Left lung (tissue), 14 donors: ENCODE measurements at regions of chr3 and their contacts with region 1.

Region 1: DNA sequence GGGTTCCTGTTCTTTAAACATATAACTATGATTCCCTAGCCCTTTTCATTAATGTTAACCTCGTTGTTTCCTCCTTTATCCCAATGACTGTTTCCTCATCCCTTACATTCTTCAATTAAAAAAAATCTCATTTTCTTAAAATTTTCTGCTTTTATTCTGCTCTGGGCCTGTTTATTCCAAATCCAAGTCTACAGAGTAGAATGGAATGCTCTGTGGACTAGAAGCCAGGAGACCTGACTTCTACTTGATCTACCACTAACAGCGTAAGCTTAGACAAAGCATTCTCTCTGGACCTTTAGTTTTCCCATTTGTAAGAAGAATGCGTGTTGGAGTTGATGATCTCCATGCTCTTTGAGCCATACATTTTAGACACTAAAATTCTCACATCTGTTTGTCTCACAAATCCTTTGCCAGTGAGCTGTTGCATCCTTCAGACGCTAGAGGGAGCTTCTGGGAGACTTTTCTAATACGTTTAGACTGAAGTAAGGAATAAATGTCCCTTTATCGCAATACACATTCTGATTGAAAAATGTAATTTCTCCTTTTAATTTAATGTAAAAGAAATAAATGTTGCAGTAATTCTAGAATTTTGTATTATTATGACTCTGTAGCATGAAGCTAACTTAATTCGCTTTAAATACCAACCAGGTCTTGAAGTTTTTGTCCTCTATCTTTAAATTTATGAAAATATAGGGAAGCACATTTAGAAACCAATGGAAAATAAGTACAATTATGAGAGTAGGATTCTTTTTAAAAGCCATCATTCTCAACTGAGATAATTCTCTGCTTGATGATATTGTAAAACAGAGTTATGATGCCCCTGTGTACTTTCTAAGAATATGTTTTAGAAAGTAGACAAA is 21.7 kb upstream of the GMNC start:
- DNase-seq: peak in 2 of 4 donors; percentile 23 to 53
- ATAC-seq: peak; percentile 59
- H3K4me3 ChIP-seq: no peak overlapping the region
- H3K27ac ChIP-seq: no peak overlapping the region
- H3K4me1 ChIP-seq: no peaks in the 10 kb centered on the region
- H3K27me3 ChIP-seq: peaks cover 2 to 3% of the 10 kb centered on the region in 2 donors
- CTCF ChIP-seq: peak; percentile 74 to 79

Region 2: GRCh38 chr3:190739641-190740185 is 144.5 kb before region 1 on chr3:
- intact Hi-C with region 1: no loop called
- DNase-seq: no peak
- ATAC-seq: no peak
- H3K4me3 ChIP-seq: no peak overlapping the region
- H3K27ac ChIP-seq: no peak overlapping the region
- H3K4me1 ChIP-seq: no peaks in the 10 kb centered on the region
- H3K27me3 ChIP-seq: no peaks in the 10 kb centered on the region
- CTCF ChIP-seq: no peak

Region 3: GRCh38 chr3:190840146-190840545 is 44.1 kb before region 1 on chr3:
- intact Hi-C with region 1: no loop called
- DNase-seq: no peak
- ATAC-seq: no peak
- H3K4me3 ChIP-seq: no peak overlapping the region
- H3K27ac ChIP-seq: no peak overlapping the region
- H3K4me1 ChIP-seq: no peaks in the 10 kb centered on the region
- H3K27me3 ChIP-seq: no peaks in the 10 kb centered on the region
- CTCF ChIP-seq: no peak

Region 4: DNA sequence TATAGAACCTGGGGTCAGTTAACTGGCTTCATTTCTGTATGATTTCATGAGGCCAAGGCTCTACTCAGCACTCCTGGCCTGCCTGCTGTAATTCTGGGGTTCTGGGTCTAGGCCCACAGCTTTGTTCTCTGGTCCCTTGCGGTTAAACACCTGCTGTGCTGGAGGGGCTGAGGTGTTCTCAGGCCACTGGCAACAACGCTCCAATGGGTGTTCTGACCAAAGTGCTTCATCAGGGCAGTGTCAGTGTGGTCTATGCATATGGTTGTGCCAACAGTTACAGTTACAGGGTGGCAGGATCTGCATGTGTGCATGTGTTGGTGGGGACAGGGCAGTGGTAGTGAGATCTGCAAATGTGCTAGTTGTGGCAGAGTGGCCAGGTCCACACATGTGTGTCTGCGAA is 42.4 kb after region 1 on chr3:
- intact Hi-C with region 1: no loop called
- DNase-seq: no peak
- ATAC-seq: no peak
- H3K4me3 ChIP-seq: no peak overlapping the region
- H3K27ac ChIP-seq: no peak overlapping the region
- H3K4me1 ChIP-seq: no peaks in the 10 kb centered on the region
- H3K27me3 ChIP-seq: no peaks in the 10 kb centered on the region
- CTCF ChIP-seq: no peak

Region 5: DNA sequence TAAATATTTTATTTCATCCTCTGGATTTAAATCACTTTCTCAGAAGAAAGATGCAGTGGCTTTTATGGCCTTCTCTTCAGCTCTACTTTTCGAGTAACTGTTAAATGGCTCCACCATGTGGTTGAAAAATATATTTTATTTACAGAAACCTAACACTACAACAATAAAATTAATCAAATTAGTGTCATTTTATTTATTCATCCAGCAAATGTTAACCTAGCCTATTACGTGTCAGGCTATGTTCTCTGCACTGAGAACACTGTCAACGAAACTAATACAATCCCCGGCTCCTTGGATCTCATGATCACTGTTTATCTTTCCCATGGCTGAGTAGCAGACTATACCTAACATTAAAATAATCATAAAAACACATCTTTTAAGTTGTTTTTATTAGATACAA is 166.8 kb after region 1 on chr3:
- intact Hi-C with region 1: loop called in 1 of 2 experiments (anchors 10 kb)
- DNase-seq: peak in 2 of 4 donors; percentile 11 to 21
- ATAC-seq: no peak
- H3K4me3 ChIP-seq: no peak overlapping the region
- H3K27ac ChIP-seq: no peak overlapping the region
- H3K4me1 ChIP-seq: no peaks in the 10 kb centered on the region
- H3K27me3 ChIP-seq: no peaks in the 10 kb centered on the region
- CTCF ChIP-seq: peak; percentile 8 to 42